CD4-positive, alpha-beta T cell (primary cell): ENCODE measurements at regions of chr20 and their contacts with region 1.

Region 1: GRCh38 chr20:44217342-44218092 is 6.9 kb upstream of the OSER1 start:
- DNase-seq: peak; percentile 51 to 87 (median 63)
- ATAC-seq: peak; percentile 49
- H3K4me3 ChIP-seq: peak overlapping the region; percentile 41
- H3K4me3 Mint-ChIP-seq: peak overlapping the region; percentile 80
- H3K27ac ChIP-seq: peak overlapping the region; percentile 62 to 71
- H3K27ac Mint-ChIP-seq: peak overlapping the region; percentile 91
- H3K4me1 ChIP-seq: peaks cover 46% of the 10 kb centered on the region
- H3K4me1 Mint-ChIP-seq: peaks cover 60% of the 10 kb centered on the region
- H3K27me3 ChIP-seq: no peaks in the 10 kb centered on the region
- H3K27me3 Mint-ChIP-seq: no peaks in the 10 kb centered on the region
- CTCF ChIP-seq: peak; percentile 98

Region 2: DNA sequence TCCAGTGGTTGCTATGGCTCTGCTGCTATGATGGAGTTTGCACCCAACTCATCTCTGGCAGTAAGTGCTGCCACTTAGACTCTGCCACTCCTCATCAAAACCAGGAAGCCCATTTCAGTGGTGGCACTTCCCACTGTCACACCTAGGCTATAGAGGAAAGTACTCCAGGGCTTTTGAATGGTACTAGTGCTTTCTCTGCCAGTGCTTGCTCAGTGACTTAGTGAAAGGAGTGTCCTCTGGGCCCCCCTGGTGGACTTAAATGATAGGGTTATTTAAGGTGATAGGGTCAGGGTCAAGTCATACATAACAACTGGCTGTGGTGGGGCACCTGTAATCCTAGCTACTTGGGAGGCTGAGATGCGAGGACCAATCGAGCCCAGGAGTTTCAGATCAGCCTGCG is 70.7 kb after region 1 on chr20:
- CTCF ChIA-PET with region 1: interaction called, 6 read pairs
- POLR2A ChIA-PET with region 1: interaction called, 3 read pairs
- intact Hi-C with region 1: loop called in 1 of 2 experiments (anchors 1 kb)
- DNase-seq: peak in 4 of 14 experiments; percentile 20 to 49 (median 36)
- ATAC-seq: peak; percentile 51
- H3K4me3 ChIP-seq: no peak overlapping the region
- H3K4me3 Mint-ChIP-seq: no peak overlapping the region
- H3K27ac ChIP-seq: no peak overlapping the region
- H3K27ac Mint-ChIP-seq: no peak overlapping the region
- H3K4me1 ChIP-seq: no peaks in the 10 kb centered on the region
- H3K4me1 Mint-ChIP-seq: no peaks in the 10 kb centered on the region
- H3K27me3 ChIP-seq: no peaks in the 10 kb centered on the region
- H3K27me3 Mint-ChIP-seq: no peaks in the 10 kb centered on the region
- CTCF ChIP-seq: no peak

Region 3: DNA sequence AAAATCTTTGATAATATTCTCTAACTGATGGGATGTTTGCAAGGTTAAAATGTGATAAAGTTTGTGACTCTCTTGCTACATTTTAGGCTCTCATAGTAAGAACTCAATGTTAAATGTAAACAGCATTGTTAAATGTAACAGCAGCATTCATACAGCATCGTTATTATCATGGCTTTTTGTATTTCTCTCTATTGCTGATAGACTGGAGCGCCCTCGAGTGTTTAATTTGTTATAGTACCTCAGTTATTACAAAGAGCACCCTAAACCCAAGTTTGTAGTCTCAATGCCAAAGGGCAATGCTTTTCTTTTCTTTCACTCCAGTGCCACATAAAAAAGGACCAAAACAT is 243.3 kb after region 1 on chr20:
- CTCF ChIA-PET with region 1: interaction called, 3 read pairs
- POLR2A ChIA-PET with region 1: no interaction called
- intact Hi-C with region 1: loop called (anchors 1 kb)
- DNase-seq: peak in 4 of 14 experiments; percentile 14 to 41 (median 31)
- ATAC-seq: no peak
- H3K4me3 ChIP-seq: no peak overlapping the region
- H3K4me3 Mint-ChIP-seq: no peak overlapping the region
- H3K27ac ChIP-seq: no peak overlapping the region
- H3K27ac Mint-ChIP-seq: no peak overlapping the region
- H3K4me1 ChIP-seq: no peaks in the 10 kb centered on the region
- H3K4me1 Mint-ChIP-seq: no peaks in the 10 kb centered on the region
- H3K27me3 ChIP-seq: no peaks in the 10 kb centered on the region
- H3K27me3 Mint-ChIP-seq: no peaks in the 10 kb centered on the region
- CTCF ChIP-seq: peak; percentile 43

Region 4: GRCh38 chr20:44733341-44734069 is 516.0 kb after region 1 on chr20:
- CTCF ChIA-PET with region 1: no interaction called
- POLR2A ChIA-PET with region 1: no interaction called
- intact Hi-C with region 1: loop called (anchors 1 to 5 kb)
- DNase-seq: peak; percentile 38 to 81 (median 50)
- ATAC-seq: peak; percentile 74
- H3K4me3 ChIP-seq: no peak overlapping the region
- H3K4me3 Mint-ChIP-seq: no peak overlapping the region
- H3K27ac ChIP-seq: no peak overlapping the region
- H3K27ac Mint-ChIP-seq: no peak overlapping the region
- H3K4me1 ChIP-seq: peaks cover 14% of the 10 kb centered on the region
- H3K4me1 Mint-ChIP-seq: peaks cover 11% of the 10 kb centered on the region
- H3K27me3 ChIP-seq: no peaks in the 10 kb centered on the region
- H3K27me3 Mint-ChIP-seq: no peaks in the 10 kb centered on the region
- CTCF ChIP-seq: peak; percentile 65